Stomach (tissue), 19 donors: ENCODE measurements at regions of chr1 and their contacts with region 1.

Region 1: DNA sequence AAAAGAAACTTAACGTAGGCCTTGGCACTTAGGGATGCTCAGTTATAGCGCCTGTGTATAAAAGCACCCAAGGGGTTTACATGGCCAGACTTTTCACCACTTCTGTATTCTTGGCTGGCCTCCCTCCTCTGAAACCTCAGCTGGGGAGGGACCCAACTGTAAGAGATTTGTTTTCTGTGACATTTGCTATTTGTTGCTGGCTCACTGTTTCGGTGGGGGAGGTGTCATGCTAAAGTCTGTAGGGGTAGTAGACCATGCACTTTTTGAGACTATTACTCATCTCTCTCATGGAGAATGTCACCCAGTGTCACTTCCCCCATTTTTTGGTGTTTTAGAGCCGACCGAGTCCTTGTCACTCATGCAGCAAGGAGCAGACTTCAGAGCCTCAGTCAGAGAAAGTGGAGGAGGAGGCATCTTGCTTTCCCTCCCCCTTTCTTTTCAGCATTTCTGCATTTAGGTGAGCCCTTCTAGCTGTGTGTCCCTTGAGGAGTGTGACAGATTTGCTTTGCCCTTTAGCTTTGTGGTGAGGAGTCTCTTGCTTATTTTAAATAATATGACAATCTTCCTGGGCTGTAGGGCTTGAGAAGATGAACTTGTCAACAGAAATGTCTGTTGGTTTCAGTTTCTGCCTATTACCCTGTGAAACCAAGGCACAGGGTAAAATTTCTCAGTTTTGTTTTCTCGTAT is 160.1 kb downstream of the FASLG start:
- DNase-seq: peak in 1 of 2 donors; percentile 49
- H3K4me3 ChIP-seq: no peak overlapping the region
- H3K27ac ChIP-seq: peak overlapping the region in 2 of 5 donors; percentile 9 to 11
- H3K4me1 ChIP-seq: peaks cover 0 to 4% (median 0%) of the 10 kb centered on the region in 4 donors
- H3K27me3 ChIP-seq: no peaks in the 10 kb centered on the region
- CTCF ChIP-seq: no peak
- EP300 ChIP-seq: no peak
- POLR2A ChIP-seq: no peak

Region 2: DNA sequence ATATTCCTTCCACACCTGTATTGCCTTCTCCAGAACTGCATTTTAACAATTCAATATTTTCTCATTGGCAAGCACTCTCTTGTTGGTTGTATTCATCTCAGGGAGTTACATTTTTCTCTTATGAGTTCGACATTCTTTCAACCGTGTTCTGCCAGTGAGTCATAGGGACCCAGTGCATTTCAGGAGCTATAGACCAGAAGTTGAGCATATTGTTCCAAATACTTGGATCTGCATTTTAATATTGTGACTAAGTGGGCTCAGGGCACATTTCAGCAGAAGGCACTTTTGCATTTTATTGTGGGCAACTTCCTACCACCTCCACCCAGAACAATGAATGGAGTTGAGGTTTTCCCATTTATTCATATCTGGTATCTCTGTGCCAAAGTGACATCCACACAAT is 99.0 kb after region 1 on chr1:
- intact Hi-C with region 1: no loop called
- DNase-seq: no peak
- H3K4me3 ChIP-seq: no peak overlapping the region
- H3K27ac ChIP-seq: peak overlapping the region in 1 of 5 donors; percentile 16
- H3K4me1 ChIP-seq: peaks cover 0 to 32% (median 11%) of the 10 kb centered on the region in 4 donors
- H3K27me3 ChIP-seq: no peaks in the 10 kb centered on the region
- CTCF ChIP-seq: no peak
- EP300 ChIP-seq: no peak
- POLR2A ChIP-seq: no peak

Region 3: DNA sequence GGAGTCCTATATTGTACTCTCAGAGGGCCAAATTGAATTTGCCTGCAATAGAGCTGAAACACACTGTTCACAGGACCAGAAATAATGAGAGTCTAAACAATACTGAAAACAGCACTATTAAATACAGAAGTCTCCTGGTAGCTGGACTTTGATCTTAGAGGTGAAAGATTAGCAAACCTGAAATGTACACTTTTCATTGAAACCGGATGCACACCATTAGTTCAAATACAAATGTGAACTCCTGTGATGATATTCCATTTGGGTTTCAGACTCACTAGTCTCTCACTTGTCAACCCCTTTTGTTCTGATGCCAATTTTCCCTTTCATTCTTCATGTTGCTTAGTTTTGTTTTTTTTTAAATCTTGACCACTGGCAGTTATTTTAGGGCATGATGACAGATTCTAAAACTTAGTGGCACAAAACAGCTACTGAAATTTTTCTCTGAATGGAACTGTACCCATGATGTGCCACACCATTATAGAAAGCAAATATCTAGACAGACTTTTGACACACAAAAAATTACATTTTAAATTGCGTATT is 394.0 kb after region 1 on chr1:
- intact Hi-C with region 1: loop called (anchors 10 kb)
- DNase-seq: peak in 1 of 2 donors; percentile 46
- H3K4me3 ChIP-seq: no peak overlapping the region
- H3K27ac ChIP-seq: no peak overlapping the region
- H3K4me1 ChIP-seq: peaks cover 0 to 22% (median 13%) of the 10 kb centered on the region in 4 donors
- H3K27me3 ChIP-seq: no peaks in the 10 kb centered on the region
- CTCF ChIP-seq: no peak
- EP300 ChIP-seq: no peak
- POLR2A ChIP-seq: no peak